ENCODE measurements at regions of chr11 and their contacts with region 1.

Region 1: DNA sequence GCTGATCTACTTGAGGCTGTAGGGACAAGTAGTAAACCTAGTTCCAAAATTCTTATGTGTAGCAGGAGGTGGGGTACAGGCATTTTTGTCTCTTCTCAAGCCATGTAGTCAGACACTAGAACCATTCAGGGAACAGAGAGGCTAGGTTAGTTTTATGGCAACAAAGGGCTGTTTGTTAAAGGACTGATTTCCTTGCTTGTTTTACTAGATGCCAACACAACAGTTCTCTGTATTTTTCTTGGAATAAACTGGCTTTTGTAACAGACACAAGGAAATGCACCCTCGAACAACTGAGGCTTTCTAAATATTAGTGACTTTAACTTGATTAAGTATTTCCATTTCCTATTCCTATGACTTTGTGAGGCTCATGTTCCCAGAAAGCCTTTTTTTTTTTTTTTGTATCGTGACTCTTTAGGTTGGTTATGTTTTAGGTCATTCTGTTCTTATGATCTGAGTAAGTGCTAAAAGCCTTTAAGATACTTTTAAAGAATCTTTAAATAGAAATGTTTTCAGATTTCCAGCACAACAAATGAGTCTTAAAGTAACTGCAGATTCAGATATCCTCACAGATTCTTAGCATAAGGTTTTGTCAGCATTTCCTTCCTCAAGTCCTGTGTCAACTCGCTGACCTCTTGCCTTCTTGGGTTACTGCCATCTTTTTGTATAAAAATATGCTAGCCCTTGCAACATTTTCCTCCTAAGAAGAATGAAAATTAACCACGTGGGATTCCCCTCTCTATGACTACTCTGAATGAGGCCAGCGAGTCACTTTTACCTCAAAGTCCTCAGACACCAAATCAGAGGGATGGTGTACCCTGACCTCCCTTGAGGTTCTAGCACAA is 92.5 kb downstream of the CCDC83 start:
- DNase-seq: peak; percentile 62
- ATAC-seq: peak; percentile 80
- H3K4me3 Mint-ChIP-seq: peak overlapping the region; percentile 46
- H3K27ac Mint-ChIP-seq: peak overlapping the region; percentile 97
- H3K4me1 Mint-ChIP-seq: peaks cover 48% of the 10 kb centered on the region
- H3K27me3 Mint-ChIP-seq: no peaks in the 10 kb centered on the region

Region 2: GRCh38 chr11:85759915-85760314 is 187.7 kb before region 1 on chr11:
- CTCF ChIA-PET with region 1: no interaction called
- POLR2A ChIA-PET with region 1: no interaction called
- intact Hi-C with region 1: loop called in 1 of 2 experiments (anchors 5 kb)
- DNase-seq: no peak
- ATAC-seq: no peak
- H3K4me3 Mint-ChIP-seq: no peak overlapping the region
- H3K27ac Mint-ChIP-seq: no peak overlapping the region
- H3K4me1 Mint-ChIP-seq: peaks cover 65% of the 10 kb centered on the region
- H3K27me3 Mint-ChIP-seq: no peaks in the 10 kb centered on the region

Region 3: DNA sequence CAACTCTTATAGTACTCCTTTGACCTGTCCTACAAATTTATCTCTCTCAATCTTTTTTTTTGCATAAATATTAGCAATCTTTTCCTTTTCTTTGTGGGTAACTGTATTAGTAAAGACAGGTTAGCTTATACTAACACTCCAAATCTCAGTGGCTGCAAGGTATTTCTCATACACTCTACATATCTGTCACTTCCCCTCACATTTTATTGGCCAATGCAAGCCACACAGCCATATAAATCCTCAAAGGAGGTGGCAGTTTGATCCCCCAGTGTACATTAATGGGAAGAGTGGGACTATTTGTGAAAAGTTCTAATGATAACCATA is 254.3 kb after region 1 on chr11:
- CTCF ChIA-PET with region 1: no interaction called
- POLR2A ChIA-PET with region 1: no interaction called
- intact Hi-C with region 1: loop called in 1 of 2 experiments (anchors 2 kb)
- DNase-seq: peak; percentile 39
- ATAC-seq: peak; percentile 94
- H3K4me3 Mint-ChIP-seq: no peak overlapping the region
- H3K27ac Mint-ChIP-seq: no peak overlapping the region
- H3K4me1 Mint-ChIP-seq: peaks cover 6% of the 10 kb centered on the region
- H3K27me3 Mint-ChIP-seq: peaks cover under 1% of the 10 kb centered on the region

Region 4: GRCh38 chr11:86230921-86231430 is 283.3 kb after region 1 on chr11:
- CTCF ChIA-PET with region 1: no interaction called
- POLR2A ChIA-PET with region 1: no interaction called
- intact Hi-C with region 1: loop called (anchors 1 kb)
- DNase-seq: no peak
- ATAC-seq: peak; percentile 28
- H3K4me3 Mint-ChIP-seq: peak overlapping the region; percentile 20
- H3K27ac Mint-ChIP-seq: peak overlapping the region; percentile 86
- H3K4me1 Mint-ChIP-seq: peaks cover 65% of the 10 kb centered on the region
- H3K27me3 Mint-ChIP-seq: no peaks in the 10 kb centered on the region

Region 5: DNA sequence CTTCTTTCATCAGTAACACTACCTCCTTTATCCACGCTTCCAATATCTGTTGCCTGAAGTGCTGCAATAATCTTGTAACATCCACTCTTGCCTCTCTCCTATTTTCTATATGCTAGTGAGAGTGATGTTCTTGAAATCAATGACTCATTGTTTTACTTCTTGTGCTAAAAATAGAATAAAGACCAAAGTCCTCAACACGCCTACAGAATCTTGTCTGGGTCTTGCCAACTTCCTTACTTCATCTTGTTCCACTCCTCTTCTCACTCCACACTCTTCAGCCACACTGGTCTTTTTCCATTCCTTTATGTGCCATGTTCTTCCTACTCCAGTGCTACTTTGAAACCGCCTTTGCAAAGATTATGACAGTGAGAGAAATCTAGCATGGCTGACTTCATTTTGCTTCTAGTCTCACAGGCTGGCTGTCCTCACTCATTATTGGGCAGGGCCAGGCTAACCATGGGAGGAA is 563.5 kb after region 1 on chr11:
- CTCF ChIA-PET with region 1: no interaction called
- POLR2A ChIA-PET with region 1: no interaction called
- intact Hi-C with region 1: loop called in 1 of 2 experiments (anchors 5 kb)
- DNase-seq: peak; percentile 14
- ATAC-seq: peak; percentile 82
- H3K4me3 Mint-ChIP-seq: no peak overlapping the region
- H3K27ac Mint-ChIP-seq: no peak overlapping the region
- H3K4me1 Mint-ChIP-seq: no peaks in the 10 kb centered on the region
- H3K27me3 Mint-ChIP-seq: no peaks in the 10 kb centered on the region

Region 6: GRCh38 chr11:86802601-86803051 is 855.0 kb after region 1 on chr11:
- CTCF ChIA-PET with region 1: no interaction called
- POLR2A ChIA-PET with region 1: no interaction called
- intact Hi-C with region 1: loop called (anchors 5 kb)
- DNase-seq: peak; percentile 39
- ATAC-seq: peak; percentile 34
- H3K4me3 Mint-ChIP-seq: no peak overlapping the region
- H3K27ac Mint-ChIP-seq: no peak overlapping the region
- H3K4me1 Mint-ChIP-seq: peaks cover 62% of the 10 kb centered on the region
- H3K27me3 Mint-ChIP-seq: peaks cover 55% of the 10 kb centered on the region